Psoas muscle (tissue), 8 donors: ENCODE measurements at regions of chr17 and their contacts with region 1.

Region 1: DNA sequence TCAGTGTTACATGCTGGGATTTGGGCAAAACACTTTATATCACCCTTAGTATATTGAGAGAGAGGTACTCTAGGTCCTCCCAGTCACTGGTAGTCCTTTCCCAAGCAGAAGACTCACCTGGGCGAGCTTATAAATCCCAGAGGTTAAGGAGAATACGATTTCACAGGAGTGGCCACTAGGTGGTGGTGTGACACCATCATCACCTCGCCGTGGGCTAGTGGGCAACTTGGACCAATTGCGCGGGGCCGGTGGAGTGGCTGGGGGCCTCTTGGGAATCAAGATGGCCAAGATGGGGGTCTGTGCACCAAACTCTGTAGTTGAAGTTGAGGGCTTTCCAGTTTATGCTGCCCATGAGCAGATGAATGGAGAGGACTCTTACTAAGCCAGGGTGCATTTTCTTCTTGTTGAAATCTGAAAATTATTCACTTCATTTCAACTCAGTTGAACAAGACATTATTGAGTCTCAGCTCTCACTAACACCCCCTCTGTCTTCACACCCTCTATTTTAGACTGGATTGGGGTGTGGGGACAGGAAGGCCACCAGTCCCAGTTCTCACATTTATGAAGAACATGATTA is 38.2 kb upstream of the PIRT start:
- DNase-seq: peak; percentile 19 to 55
- ATAC-seq: peak in 1 of 4 donors; percentile 38
- H3K4me3 ChIP-seq: no peak overlapping the region
- H3K27ac ChIP-seq: no peak overlapping the region
- H3K4me1 ChIP-seq: no peaks in the 10 kb centered on the region
- H3K27me3 ChIP-seq: peaks cover 0 to 10% (median 0%) of the 10 kb centered on the region in 3 donors
- CTCF ChIP-seq: peak; percentile 61

Region 2: DNA sequence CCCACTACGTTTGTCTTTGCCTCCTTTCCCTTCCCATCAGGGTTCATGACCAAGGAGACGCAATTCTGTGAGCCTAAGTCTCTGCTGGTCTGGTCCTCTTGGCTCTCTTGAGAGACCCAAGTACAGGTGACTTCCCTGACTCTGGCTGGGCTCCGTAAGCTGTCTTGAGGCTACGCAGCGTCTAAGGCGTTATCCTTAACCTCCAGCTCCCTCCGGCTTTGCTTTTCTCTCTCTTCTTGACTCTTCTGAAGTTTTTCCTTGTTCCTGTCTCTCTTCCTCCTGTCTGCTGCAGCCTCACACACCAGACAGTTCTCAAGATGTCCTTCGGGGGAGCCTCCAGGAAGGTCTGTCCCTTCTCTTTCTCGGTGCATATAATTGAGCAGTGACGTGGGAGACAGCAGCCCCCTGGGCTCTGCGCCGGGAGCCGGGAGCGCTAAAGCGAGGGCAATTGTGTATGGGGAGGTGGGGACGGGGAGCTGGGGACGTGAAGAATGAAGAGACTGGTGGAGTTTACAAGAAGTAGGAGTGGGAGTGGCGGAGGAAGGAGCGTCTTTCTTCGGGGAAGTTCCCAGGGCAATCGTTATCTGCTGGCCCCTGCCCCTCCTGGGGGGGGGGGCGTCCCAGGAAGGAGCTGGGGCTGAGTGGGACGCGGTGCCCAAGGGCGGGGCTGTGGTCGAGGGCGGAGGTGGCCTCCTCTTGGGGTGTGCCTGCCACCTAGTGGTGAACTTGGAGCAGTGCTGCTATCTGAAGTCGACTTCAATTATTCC is 31.3 kb before region 1 on chr17:
- intact Hi-C with region 1: no loop called
- DNase-seq: peak; percentile 75 to 84
- ATAC-seq: peak; percentile 94 to 99 (median 95)
- H3K4me3 ChIP-seq: peak overlapping the region; percentile 64
- H3K27ac ChIP-seq: no peak overlapping the region
- H3K4me1 ChIP-seq: no peaks in the 10 kb centered on the region
- H3K27me3 ChIP-seq: peaks cover 0 to 2% (median 0%) of the 10 kb centered on the region in 3 donors
- CTCF ChIP-seq: peak; percentile 96

Region 3: DNA sequence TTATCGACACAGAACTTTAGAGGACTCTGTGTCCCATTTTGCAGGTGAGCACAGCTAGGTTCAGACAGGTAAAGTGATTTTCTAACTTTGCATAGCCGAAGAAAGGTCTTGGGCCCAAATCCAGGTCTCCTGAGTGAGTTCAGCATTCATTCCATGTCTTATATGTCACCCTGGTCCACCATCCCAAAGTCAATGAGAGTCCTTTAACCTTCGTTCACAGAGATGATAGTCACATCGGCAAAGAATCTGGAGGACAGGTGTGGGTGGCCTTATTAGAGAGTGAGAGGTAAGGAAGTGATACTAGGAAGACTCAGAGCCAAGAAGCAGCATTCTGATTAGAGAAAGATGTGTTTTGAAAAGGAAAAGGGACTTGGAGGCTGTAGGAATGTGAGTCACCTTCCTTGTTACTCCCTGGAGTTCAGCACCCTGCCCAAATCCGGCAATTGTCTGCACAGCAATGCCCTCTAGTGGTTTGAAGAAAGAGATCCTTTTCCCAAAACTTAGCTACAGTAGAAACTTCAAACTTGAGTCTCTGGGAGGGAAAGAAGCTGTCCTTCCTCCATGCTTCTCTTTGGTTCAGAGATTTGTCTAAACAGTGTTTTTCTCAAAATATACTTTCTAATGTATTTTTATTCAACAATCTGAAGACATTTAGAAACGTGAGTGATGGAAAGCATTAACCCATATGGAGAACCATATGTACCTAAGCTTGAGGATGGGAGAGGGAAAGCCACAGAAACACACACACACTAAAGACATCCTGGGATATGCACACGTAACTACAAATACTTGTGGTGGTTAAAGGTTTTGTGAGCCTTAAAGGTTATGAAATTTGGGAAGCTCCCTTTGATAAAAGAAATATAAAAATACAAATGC is 268.5 kb after region 1 on chr17:
- intact Hi-C with region 1: loop called in 1 of 2 experiments (anchors 5 kb)
- DNase-seq: no peak
- ATAC-seq: no peak
- H3K4me3 ChIP-seq: no peak overlapping the region
- H3K27ac ChIP-seq: no peak overlapping the region
- H3K4me1 ChIP-seq: no peaks in the 10 kb centered on the region
- H3K27me3 ChIP-seq: no peaks in the 10 kb centered on the region
- CTCF ChIP-seq: peak; percentile 33

Region 4: DNA sequence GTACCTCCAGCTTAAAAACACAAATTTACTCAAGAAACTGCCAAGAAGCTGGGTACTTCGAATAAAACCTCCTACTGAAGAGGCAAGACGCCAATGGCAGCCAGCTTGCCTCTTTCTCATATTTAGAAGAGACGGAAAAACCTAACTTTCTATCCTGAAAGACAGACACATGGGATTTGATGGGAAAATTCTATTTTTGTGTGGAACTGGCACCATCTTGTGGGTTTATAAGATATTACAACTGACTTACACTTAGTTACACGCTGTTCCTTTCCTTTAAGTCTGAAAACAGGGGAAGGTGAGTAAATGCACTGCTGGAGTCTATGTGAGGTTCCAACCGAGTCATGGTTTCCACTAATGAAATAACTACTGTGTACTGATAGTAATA is 1110.9 kb after region 1 on chr17:
- intact Hi-C with region 1: loop called (anchors 2 to 5 kb)
- DNase-seq: no peak
- ATAC-seq: peak in 1 of 4 donors; percentile 68
- H3K4me3 ChIP-seq: no peak overlapping the region
- H3K27ac ChIP-seq: no peak overlapping the region
- H3K4me1 ChIP-seq: no peaks in the 10 kb centered on the region
- H3K27me3 ChIP-seq: no peaks in the 10 kb centered on the region
- CTCF ChIP-seq: peak; percentile 59